Activated T-helper 1 cell treated with anti-CD3 and anti-CD28 coated beads, Interleukin-12 subunit alpha, Interleukin-12 subunit beta, Interleukin-2, Interleukin-4 antibody, amounts not matched to agents 30 ng/mL and 10 ng/mL and 1 ng/mL, durations not matched to agents 14 hours and 24 hours and 36 hours (primary cell): ENCODE measurements at regions of chr11 and their contacts with region 1.

Region 1: GRCh38 chr11:61967116-61967923 is at the start of gene FTH1:
- DNase-seq: peak; percentile 86
- H3K4me3 Mint-ChIP-seq: peak within 1 kb of the TSS; percentile 89
- H3K27ac Mint-ChIP-seq: peak within 1 kb of the TSS; percentile 89
- H3K4me1 Mint-ChIP-seq: peaks cover 62% of the 10 kb centered on the region
- H3K27me3 Mint-ChIP-seq: no peaks in the 10 kb centered on the region
- total RNA-seq, gene FTH1: 566 and 580 TPM in 2 replicates

Region 2: GRCh38 chr11:61827571-61828378 is 139.5 kb before region 1 on chr11 and contains the start of gene FADS2:
- intact Hi-C with region 1: loop called (anchors 2 kb)
- DNase-seq: peak; percentile 91
- H3K4me3 Mint-ChIP-seq: peak within 1 kb of the TSS; percentile 93
- H3K27ac Mint-ChIP-seq: peak within 1 kb of the TSS; percentile 96
- H3K4me1 Mint-ChIP-seq: peaks cover 50% of the 10 kb centered on the region
- H3K27me3 Mint-ChIP-seq: no peaks in the 10 kb centered on the region
- total RNA-seq, gene FADS2: 250 and 256 TPM in 2 replicates

Region 3: DNA sequence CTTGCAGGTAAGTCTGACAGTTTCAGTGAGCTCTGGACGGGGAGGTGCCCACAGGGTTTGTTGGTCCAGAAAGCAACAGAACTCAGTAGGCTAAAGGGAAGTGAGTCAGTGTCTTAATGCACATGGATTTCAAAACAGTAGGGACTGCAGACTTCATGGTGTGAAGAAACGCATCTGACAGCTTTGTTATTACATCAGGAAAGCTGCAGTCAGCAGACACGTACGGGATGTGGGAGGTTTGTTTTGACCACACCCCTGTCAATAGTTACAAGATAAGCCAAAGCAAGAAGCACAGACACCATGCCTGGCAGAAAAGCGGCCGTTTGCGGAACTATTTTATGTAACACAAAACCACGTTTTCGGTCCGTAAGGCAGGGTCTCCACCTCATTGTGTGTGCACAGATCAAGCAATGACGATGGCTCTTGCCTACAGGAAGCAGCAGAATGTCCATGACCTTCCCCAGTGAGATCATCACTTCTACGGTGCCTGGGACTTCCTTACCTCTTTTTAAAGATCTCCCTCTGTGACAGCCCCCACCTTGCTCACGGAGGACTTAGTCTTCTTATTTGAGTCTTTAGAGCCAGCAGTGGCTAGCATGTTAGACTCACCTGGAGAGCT is 58.3 kb after region 1 on chr11:
- intact Hi-C with region 1: loop called (anchors 1 kb)
- DNase-seq: peak; percentile 75
- H3K4me3 Mint-ChIP-seq: peak overlapping the region; percentile 59
- H3K27ac Mint-ChIP-seq: peak overlapping the region; percentile 90
- H3K4me1 Mint-ChIP-seq: peaks cover 20% of the 10 kb centered on the region
- H3K27me3 Mint-ChIP-seq: peaks cover 3% of the 10 kb centered on the region

Region 4: GRCh38 chr11:62108017-62108750 is 140.9 kb after region 1 on chr11:
- intact Hi-C with region 1: loop called (anchors 5 kb)
- DNase-seq: peak; percentile 12
- H3K4me3 Mint-ChIP-seq: no peak overlapping the region
- H3K27ac Mint-ChIP-seq: no peak overlapping the region
- H3K4me1 Mint-ChIP-seq: peaks cover 13% of the 10 kb centered on the region
- H3K27me3 Mint-ChIP-seq: peaks cover 4% of the 10 kb centered on the region